ENCODE measurements at regions of chr2 and their contacts with region 1.

Region 1: DNA sequence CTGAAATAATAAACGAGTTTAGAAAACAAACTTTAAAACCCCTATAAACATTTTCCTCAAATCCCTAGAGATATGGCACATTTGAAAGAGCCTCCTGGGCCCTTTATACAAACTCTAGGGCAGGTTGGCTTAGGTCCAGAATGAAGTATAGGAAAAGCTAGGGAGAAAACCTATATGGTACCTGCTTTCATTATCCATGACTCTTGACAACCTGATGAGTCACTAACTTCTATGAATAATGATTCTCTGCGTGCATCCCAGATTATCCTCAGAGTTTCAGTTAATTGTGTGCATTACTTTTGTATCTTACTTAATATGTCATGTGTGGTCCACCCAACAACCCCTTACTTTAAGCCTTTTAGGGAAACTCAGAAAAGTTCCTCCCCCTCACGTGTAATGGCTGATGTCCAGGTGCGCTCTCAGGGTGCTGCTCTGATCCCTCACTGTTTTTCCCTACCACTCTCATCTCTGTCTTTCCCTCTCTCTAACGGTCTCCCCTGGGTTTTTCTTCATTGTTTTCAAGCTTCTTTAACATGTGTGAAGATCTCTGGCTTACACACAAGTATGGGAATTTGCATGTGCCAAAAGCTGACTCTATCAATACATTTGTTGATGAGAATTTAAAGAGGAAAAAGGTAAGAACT is 78.5 kb downstream of the LRP1B start:
- DNase-seq: no peak
- H3K4me3 ChIP-seq: no peak overlapping the region
- H3K27ac ChIP-seq: no peak overlapping the region
- H3K4me1 ChIP-seq: no peaks in the 10 kb centered on the region
- H3K27me3 ChIP-seq: no peaks in the 10 kb centered on the region
- CTCF ChIP-seq: no peak
- EP300 ChIP-seq: no peak
- POLR2A ChIP-seq: no peak

Region 2: DNA sequence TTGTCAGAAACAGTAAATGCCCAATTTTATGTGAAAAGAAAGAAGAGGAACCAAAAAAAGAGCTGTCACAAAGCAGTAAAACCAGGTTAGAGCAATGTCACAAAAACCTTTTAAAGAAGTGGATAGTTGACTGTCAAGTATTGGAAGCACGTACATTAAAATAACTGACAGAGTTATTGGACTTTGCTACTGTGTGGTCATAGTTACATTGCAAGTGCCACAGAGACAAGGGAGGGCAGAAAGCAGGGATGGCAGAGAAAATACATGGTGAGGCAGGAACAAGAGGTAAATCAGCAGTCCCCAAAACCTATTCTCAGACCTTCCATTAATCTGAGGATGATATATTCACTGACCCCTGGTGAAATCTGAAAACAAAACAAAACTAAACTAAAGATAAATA is 37.8 kb before region 1 on chr2:
- in situ Hi-C with region 1: no loop called
- intact Hi-C with region 1: loop called (anchors 1 kb)
- DNase-seq: no peak
- H3K4me3 ChIP-seq: no peak overlapping the region
- H3K27ac ChIP-seq: no peak overlapping the region
- H3K4me1 ChIP-seq: no peaks in the 10 kb centered on the region
- H3K27me3 ChIP-seq: no peaks in the 10 kb centered on the region
- CTCF ChIP-seq: no peak
- EP300 ChIP-seq: no peak
- POLR2A ChIP-seq: no peak

Region 3: GRCh38 chr2:143183804-143184463 is 1131.6 kb after region 1 on chr2:
- in situ Hi-C with region 1: no loop called
- intact Hi-C with region 1: no loop called
- DNase-seq: no peak
- H3K4me3 ChIP-seq: no peak overlapping the region
- H3K27ac ChIP-seq: no peak overlapping the region
- H3K4me1 ChIP-seq: no peaks in the 10 kb centered on the region
- H3K27me3 ChIP-seq: no peaks in the 10 kb centered on the region
- CTCF ChIP-seq: no peak
- EP300 ChIP-seq: no peak
- POLR2A ChIP-seq: no peak

Measured in transverse colon (tissue), 4 donors.